Transverse colon (tissue), 4 donors: ENCODE measurements at regions of chr5 and their contacts with region 1.

Region 1: DNA sequence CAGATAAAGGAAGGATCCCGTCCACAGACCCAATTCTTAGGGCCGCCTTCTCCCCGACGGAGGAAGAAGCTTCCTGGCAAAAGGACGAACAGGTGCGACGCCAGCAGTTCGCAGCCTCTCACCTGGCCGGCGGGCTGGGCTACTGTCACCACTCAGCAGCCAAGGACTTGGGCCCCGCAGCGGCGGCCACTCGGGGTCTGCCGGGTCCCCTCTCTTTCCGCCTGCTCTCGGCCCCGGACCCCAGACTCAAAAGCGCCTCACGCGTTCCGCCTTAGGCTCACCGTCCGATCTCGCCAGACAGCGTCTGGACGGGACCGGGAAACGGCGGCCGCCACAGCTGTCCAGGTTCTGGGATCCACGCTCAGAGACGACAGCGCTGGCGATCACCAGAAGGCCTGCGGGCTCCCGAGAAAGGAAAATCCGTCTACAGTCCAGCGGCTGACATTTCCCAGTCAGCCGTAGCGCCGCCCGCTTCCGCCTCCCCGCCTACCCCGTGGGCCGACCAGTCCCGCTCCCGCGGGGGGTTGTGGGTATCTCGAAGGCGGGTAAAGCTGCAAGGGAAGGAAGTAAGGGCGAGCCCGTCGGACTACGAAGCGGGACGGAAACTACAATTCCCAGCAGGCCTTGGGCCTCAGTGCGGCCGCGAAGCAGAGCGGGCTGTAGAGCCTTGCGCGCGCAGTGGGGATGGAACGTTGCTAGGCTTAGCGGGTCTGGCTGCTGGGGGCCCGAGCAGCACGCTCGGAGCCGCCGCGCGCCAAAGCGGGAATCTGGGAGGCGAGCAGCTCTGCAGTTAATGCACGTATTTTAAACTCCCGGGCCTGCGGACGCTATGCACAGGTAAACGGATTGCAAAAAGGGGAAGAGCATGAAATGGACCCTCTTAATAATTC is at the starts of genes LMBRD2 and SKP2:
- DNase-seq: peak; percentile 97
- H3K4me3 ChIP-seq: peak within 1 kb of the TSS; percentile 77 to 100 (median 96)
- H3K27ac ChIP-seq: peak within 1 kb of the TSS; percentile 90 to 94 (median 92)
- H3K4me1 ChIP-seq: peaks cover 3 to 30% (median 20%) of the 10 kb centered on the region in 4 donors
- H3K27me3 ChIP-seq: no peaks in the 10 kb centered on the region
- CTCF ChIP-seq: no peak
- EP300 ChIP-seq: no peak
- POLR2A ChIP-seq: peak; percentile 68
- total RNA-seq, gene LMBRD2: 5.8 to 18.3 (median 11.3) TPM
- total RNA-seq, gene SKP2: 1.1 to 12.4 (median 8.6) TPM

Region 2: DNA sequence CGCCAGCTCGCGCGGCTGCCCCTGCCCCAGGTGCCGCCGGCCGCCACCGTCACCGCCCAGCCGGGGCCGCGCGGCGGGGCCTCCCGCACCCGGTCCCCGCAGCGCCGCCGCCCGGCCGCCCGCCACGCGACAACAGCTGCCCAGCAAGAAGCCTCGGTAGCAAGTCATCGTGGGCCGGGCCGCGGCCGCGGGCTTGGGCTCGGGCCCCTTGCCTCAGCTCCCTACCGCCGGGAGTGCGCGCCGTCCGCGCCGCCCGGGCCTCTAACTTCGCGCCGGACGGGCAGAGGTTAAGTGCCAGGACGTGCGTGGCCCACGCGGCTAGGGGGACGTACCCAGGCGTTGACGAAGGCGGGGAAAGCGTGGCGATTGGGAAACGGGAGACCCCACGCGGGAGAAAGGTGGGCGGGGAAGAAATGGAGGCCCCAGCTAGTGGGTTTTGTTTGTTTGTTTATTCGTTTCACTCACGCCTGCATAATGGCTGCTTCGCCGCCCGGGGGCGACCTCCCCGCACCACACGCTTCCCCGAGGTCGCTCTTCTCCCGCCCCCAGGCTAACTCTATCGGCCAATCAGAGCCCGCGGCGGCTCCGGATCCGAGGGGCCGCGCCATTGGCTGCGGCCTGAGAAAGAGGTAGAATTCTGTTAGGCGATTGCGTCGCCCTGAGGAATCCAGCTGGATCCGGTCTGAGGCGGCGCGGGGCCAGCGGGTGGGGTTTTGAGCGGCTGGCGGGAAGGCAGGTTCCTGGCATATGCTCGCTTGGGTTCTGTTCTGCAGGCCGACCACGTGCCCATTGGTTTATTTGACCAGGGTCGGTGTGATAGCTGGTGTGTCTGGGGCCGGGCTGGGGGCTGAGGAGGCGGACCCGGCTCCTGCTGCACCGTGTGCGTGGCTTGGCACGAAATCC is 90.2 kb after region 1 on chr5 and contains the start of gene NADK2:
- in situ Hi-C with region 1: loop called in 1 of 4 experiments (anchors 10 kb)
- intact Hi-C with region 1: no loop called
- DNase-seq: peak; percentile 95
- H3K4me3 ChIP-seq: peak within 1 kb of the TSS; percentile 87 to 98 (median 91)
- H3K27ac ChIP-seq: peak within 1 kb of the TSS; percentile 98 to 99 (median 99)
- H3K4me1 ChIP-seq: peaks cover 21 to 46% (median 36%) of the 10 kb centered on the region in 4 donors
- H3K27me3 ChIP-seq: no peaks in the 10 kb centered on the region
- CTCF ChIP-seq: peak; percentile 51 to 75 (median 64)
- EP300 ChIP-seq: peak; percentile 59
- POLR2A ChIP-seq: peak; percentile 62
- total RNA-seq, gene NADK2: 14.6 to 31.4 (median 22.4) TPM

Region 3: GRCh38 chr5:36305571-36306326 is 154.1 kb after region 1 on chr5:
- in situ Hi-C with region 1: no loop called
- intact Hi-C with region 1: no loop called
- DNase-seq: peak; percentile 39
- H3K4me3 ChIP-seq: no peak overlapping the region
- H3K27ac ChIP-seq: no peak overlapping the region
- H3K4me1 ChIP-seq: peaks cover 5 to 24% (median 17%) of the 10 kb centered on the region in 4 donors
- H3K27me3 ChIP-seq: no peaks in the 10 kb centered on the region
- CTCF ChIP-seq: peak; percentile 49 to 65 (median 58)
- EP300 ChIP-seq: no peak
- POLR2A ChIP-seq: no peak